Esophagus muscularis mucosa (tissue), 4 donors: ENCODE measurements at regions of chr17 and their contacts with region 1.

Region 1: GRCh38 chr17:70089513-70090148 is 14.6 kb downstream of the KCNJ16 start:
- DNase-seq: no peak
- H3K4me3 ChIP-seq: no peak overlapping the region
- H3K27ac ChIP-seq: peak overlapping the region in 2 of 4 donors; percentile 6 to 24
- H3K4me1 ChIP-seq: peaks cover 0 to 31% (median 27%) of the 10 kb centered on the region in 4 donors
- H3K27me3 ChIP-seq: no peaks in the 10 kb centered on the region
- CTCF ChIP-seq: no peak
- EP300 ChIP-seq: no peak
- POLR2A ChIP-seq: no peak

Region 2: GRCh38 chr17:70544317-70544716 is 454.7 kb after region 1 on chr17:
- intact Hi-C with region 1: loop called (anchors 5 kb)
- DNase-seq: no peak
- H3K4me3 ChIP-seq: no peak overlapping the region
- H3K27ac ChIP-seq: no peak overlapping the region
- H3K4me1 ChIP-seq: no peaks in the 10 kb centered on the region
- H3K27me3 ChIP-seq: no peaks in the 10 kb centered on the region
- CTCF ChIP-seq: no peak
- EP300 ChIP-seq: no peak
- POLR2A ChIP-seq: no peak